Transverse colon (tissue), 4 donors: ENCODE measurements at regions of chr3 and their contacts with region 1.

Region 1: GRCh38 chr3:128497387-128498126 is 4.6 kb upstream of the GATA2 start:
- DNase-seq: peak; percentile 61
- H3K4me3 ChIP-seq: peak overlapping the region; percentile 7 to 48 (median 40)
- H3K27ac ChIP-seq: no peak overlapping the region
- H3K4me1 ChIP-seq: peaks cover 9 to 12% (median 11%) of the 10 kb centered on the region in 4 donors
- H3K27me3 ChIP-seq: peaks cover 100% of the 10 kb centered on the region
- CTCF ChIP-seq: peak; percentile 48 to 76 (median 63)
- EP300 ChIP-seq: no peak
- POLR2A ChIP-seq: no peak

Region 2: GRCh38 chr3:128153156-128154041 is 344.2 kb before region 1 on chr3 and contains the start of gene EEFSEC:
- in situ Hi-C with region 1: loop called in 1 of 4 experiments (anchors 25 kb)
- intact Hi-C with region 1: no loop called
- DNase-seq: peak; percentile 86
- H3K4me3 ChIP-seq: peak within 1 kb of the TSS; percentile 69 to 94 (median 82)
- H3K27ac ChIP-seq: peak within 1 kb of the TSS; percentile 82 to 95 (median 94)
- H3K4me1 ChIP-seq: peaks cover 5 to 12% (median 10%) of the 10 kb centered on the region in 4 donors
- H3K27me3 ChIP-seq: no peaks in the 10 kb centered on the region
- CTCF ChIP-seq: no peak
- EP300 ChIP-seq: no peak
- POLR2A ChIP-seq: peak; percentile 59
- total RNA-seq, gene EEFSEC: 10.3 to 16.8 (median 14.2) TPM

Region 3: GRCh38 chr3:128432971-128433704 is 64.4 kb before region 1 on chr3:
- in situ Hi-C with region 1: no loop called
- intact Hi-C with region 1: loop called (anchors 5 kb)
- DNase-seq: no peak
- H3K4me3 ChIP-seq: peak overlapping the region in 2 of 4 donors; percentile 3 to 35
- H3K27ac ChIP-seq: no peak overlapping the region
- H3K4me1 ChIP-seq: peaks cover 5 to 12% (median 9%) of the 10 kb centered on the region in 4 donors
- H3K27me3 ChIP-seq: peaks cover 66% of the 10 kb centered on the region
- CTCF ChIP-seq: no peak
- EP300 ChIP-seq: no peak
- POLR2A ChIP-seq: no peak